ENCODE measurements at regions of chr16 and their contacts with region 1.

Region 1: GRCh38 chr16:30902029-30902972 is 5.9 kb downstream of the CTF1 start:
- DNase-seq: peak; percentile 60
- H3K4me3 Mint-ChIP-seq: peak overlapping the region; percentile 96
- H3K27ac Mint-ChIP-seq: peak overlapping the region; percentile 100
- H3K4me1 Mint-ChIP-seq: peaks cover 28% of the 10 kb centered on the region
- H3K27me3 Mint-ChIP-seq: no peaks in the 10 kb centered on the region

Region 2: DNA sequence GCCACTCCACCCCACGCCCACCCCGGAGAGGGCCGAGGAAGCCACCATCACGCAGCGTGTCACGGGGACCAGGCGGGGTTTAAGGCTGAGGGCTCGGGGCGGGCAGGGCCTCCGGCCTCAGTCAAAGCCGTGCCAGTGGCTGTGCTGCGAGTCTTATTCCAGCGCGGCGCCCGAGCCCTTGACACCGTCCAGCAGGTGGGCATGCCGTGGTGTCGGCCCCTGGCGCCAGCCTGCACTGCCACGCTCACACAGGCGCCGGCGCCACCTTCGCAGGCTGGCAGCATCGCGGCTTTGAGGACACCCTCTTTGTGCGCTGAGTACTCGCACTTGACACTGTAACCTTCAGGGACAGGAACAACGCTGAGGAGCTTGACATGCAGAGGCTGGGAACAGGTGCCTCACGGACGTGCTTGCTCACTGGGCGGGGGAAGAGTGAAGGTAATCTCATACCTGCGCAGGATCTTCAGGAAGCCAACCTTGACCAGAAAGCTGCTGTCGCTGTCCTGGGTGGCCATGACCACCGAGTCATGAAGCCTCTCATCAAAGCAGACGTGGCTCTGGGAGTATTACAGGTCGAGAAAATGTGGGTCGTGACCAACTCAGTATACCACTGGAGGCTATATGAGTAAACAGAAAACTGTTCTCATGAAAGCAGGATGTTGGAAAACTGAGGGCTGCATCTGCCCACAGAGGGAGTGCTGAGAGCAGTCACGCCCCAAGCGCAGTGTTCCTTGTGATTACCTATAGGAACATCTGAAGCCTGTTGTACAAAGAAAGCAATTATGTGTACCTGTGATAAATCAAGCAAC is 81.1 kb before region 1 on chr16:
- intact Hi-C with region 1: no loop called
- DNase-seq: no peak
- H3K4me3 Mint-ChIP-seq: no peak overlapping the region
- H3K27ac Mint-ChIP-seq: no peak overlapping the region
- H3K4me1 Mint-ChIP-seq: no peaks in the 10 kb centered on the region
- H3K27me3 Mint-ChIP-seq: no peaks in the 10 kb centered on the region

Region 3: DNA sequence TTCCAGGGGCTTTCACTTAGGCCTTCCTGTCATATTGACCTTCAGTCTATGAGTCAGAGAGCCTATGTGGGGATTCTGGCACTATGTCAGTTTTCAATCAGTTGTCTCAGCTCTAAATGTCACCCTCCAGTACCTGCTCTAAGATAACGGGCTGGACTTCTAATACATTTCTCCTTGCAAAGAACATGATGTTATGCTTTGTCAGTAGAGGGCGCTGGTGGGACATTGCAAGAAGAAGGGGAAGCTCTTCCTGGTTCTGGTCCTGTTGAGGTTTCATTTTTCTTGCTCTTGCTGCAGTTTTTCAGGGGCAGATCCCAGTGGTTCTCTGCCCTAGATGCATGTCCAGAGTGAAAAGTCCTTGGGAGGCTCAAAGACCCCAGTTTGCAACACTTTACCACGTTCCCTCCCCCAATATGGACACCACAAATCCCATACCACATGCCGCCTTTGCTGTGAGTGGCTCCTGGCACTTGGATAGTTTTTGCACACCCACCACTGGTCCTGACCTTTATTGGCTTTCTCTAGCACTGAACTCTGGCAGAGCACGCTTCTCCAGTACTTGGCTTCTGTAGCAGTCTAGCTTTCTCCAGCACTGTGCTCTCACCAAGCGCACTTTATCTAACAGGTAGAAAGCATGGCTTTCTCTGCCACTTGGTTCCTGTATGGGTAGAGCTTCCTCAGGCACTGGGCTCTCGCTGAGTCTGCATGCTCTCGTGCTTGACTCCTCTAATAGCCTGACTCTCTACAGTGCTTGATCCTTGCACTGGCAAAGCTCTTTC is 57.4 kb before region 1 on chr16:
- intact Hi-C with region 1: loop called (anchors 1 kb)
- DNase-seq: peak; percentile 74
- H3K4me3 Mint-ChIP-seq: no peak overlapping the region
- H3K27ac Mint-ChIP-seq: peak overlapping the region; percentile 40
- H3K4me1 Mint-ChIP-seq: peaks cover 10% of the 10 kb centered on the region
- H3K27me3 Mint-ChIP-seq: no peaks in the 10 kb centered on the region

Region 4: DNA sequence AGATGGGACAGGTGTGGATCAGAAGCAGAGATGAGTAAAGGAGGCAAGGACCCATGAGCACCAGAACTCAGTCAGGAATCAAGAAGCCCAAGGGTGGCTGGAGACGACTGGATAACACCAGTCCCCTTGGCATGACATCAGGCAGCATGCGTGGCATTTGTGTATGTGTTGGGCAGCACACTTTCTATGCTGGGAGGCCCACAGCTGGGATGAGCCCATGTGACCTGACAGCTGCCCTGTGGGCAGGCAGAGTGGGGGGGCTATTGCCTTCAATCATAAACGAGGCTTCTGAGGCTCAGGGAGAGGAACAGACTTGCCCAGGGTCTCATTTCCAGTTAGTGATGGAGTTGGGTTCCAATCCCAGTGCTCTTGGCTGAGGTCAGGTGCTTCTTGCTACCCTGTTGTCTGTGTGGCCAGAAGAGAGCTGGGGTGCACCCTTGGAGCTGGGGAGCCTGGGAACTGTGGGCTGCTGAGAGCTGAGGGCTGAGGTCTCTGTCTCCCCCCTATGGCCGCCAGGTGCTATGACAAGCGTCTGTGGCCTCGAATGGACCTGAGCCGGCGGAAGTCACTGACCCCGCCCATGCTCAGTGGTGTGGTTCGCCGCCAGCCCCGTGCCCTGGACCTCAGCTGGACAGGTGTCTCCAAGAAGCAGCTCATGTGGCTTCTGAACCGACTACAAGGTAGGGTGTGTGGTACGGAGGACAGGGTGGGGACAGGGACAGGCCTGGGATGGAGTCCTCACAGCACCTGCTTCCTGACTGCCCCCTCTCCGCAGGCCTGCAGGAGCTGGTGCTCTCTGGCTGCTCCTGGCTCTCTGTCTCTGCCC is 39.5 kb after region 1 on chr16:
- intact Hi-C with region 1: loop called (anchors 1 kb)
- DNase-seq: peak; percentile 70
- H3K4me3 Mint-ChIP-seq: peak overlapping the region; percentile 60
- H3K27ac Mint-ChIP-seq: peak overlapping the region; percentile 69
- H3K4me1 Mint-ChIP-seq: peaks cover 23% of the 10 kb centered on the region
- H3K27me3 Mint-ChIP-seq: no peaks in the 10 kb centered on the region